ENCODE measurements at regions of chr15 and their contacts with region 1.

Region 1: GRCh38 chr15:80776420-80777045 is 2.6 kb upstream of the CEMIP start:
- DNase-seq: peak; percentile 87
- ATAC-seq: peak; percentile 4; the same call in 1 of the 2 replicates
- H3K4me3 ChIP-seq: no peak overlapping the region
- H3K27ac ChIP-seq: peak overlapping the region; percentile 19; the same call in 1 of the 2 replicates
- H3K4me1 ChIP-seq: peaks cover 20% of the 10 kb centered on the region
- H3K27me3 ChIP-seq: no peaks in the 10 kb centered on the region
- CTCF ChIP-seq: peak; percentile 94
- POLR2A ChIP-seq: no peak
- RAD21 ChIP-seq: peak; percentile 91

Region 2: DNA sequence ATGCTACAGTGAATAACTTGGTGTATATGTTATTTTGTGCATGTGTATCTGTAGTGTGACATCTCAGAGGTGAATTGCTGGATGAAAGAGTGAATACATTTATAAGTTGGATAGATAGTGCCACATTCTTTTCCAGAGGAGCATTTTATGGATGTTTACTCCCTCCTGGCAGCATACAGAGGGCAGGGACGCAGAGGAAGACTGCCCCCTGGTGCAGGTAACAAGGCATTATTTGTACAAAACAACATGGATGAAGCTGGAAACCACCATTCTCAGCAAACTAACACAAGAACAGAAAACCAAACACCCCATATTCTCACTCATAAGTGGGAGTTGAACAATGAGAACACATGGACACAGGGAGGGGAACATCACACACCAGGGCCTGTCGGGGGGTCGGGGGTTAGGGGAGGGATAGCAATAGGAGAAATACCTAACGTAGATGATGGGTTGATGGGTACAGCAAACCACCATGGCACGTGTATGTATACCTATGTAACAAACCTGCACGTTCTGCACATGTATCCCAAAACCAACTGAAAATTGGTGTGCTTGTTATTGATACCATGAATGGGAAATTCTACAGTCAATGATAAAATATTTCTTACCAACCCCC is 466.7 kb before region 1 on chr15:
- CTCF ChIA-PET with region 1: no interaction called
- POLR2A ChIA-PET with region 1: no interaction called
- dilution Hi-C with region 1: no loop called
- in situ Hi-C with region 1: no loop called
- intact Hi-C with region 1: loop called (anchors 10 kb)
- DNase-seq: peak; percentile 34
- ATAC-seq: peak; percentile 77
- H3K4me3 ChIP-seq: no peak overlapping the region
- H3K27ac ChIP-seq: no peak overlapping the region
- H3K4me1 ChIP-seq: no peaks in the 10 kb centered on the region
- H3K27me3 ChIP-seq: peaks cover 2% of the 10 kb centered on the region; the same call in 1 of the 2 replicates
- CTCF ChIP-seq: peak; percentile 57
- POLR2A ChIP-seq: no peak
- RAD21 ChIP-seq: peak; percentile 68

Region 3: GRCh38 chr15:80480909-80481308 is 295.6 kb before region 1 on chr15:
- CTCF ChIA-PET with region 1: no interaction called
- POLR2A ChIA-PET with region 1: interaction called, 4 read pairs
- dilution Hi-C with region 1: no loop called
- in situ Hi-C with region 1: no loop called
- intact Hi-C with region 1: loop called (anchors 10 kb)
- DNase-seq: peak; percentile 97
- ATAC-seq: peak; percentile 69
- H3K4me3 ChIP-seq: peak overlapping the region; percentile 8; the same call in 1 of the 2 replicates
- H3K27ac ChIP-seq: peak overlapping the region; percentile 95
- H3K4me1 ChIP-seq: peaks cover 58% of the 10 kb centered on the region
- H3K27me3 ChIP-seq: no peaks in the 10 kb centered on the region
- CTCF ChIP-seq: no peak
- POLR2A ChIP-seq: no peak
- RAD21 ChIP-seq: peak; percentile 12; the same call in 1 of the 2 replicates

Region 4: GRCh38 chr15:80588801-80589200 is 187.7 kb before region 1 on chr15:
- CTCF ChIA-PET with region 1: interaction called, 12 read pairs
- POLR2A ChIA-PET with region 1: no interaction called
- dilution Hi-C with region 1: no loop called
- in situ Hi-C with region 1: no loop called
- intact Hi-C with region 1: no loop called
- DNase-seq: peak; percentile 100
- ATAC-seq: peak; percentile 92
- H3K4me3 ChIP-seq: no peak overlapping the region
- H3K27ac ChIP-seq: peak overlapping the region; percentile 90
- H3K4me1 ChIP-seq: peaks cover 17% of the 10 kb centered on the region
- H3K27me3 ChIP-seq: no peaks in the 10 kb centered on the region
- CTCF ChIP-seq: no peak
- POLR2A ChIP-seq: peak; percentile 74
- RAD21 ChIP-seq: no peak

Region 5: DNA sequence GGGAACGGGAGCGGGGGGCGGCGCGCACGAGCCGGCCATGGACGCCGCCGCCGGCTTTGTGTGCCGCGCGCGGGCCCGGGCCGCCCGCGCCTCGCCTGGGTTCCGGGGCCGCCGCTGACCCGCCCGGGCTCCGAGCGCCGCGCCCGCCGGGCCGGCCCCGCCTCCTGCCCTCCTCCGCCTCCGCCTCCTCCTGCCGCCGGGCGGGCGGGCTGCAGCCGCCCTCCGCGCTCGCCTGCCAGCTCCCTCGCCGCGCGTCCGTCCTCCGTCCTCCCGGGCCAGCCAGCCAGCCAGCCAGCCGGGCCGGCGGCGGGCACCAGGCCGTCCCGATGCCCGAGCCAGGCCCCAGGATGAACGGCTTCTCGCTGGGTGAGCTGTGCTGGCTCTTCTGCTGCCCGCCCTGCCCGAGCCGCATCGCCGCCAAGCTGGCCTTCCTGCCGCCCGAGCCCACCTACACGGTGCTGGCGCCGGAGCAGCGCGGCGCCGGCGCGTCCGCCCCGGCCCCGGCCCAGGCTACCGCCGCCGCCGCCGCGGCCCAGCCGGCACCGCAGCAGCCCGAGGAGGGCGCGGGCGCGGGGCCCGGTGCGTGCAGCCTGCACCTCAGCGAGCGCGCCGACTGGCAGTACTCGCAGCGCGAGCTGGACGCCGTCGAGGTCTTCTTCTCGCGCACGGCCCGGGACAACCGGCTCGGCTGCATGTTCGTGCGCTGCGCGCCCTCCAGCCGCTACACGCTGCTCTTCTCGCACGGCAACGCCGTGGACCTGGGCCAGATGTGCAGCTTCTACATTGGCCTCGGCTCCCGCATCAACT is 81.2 kb before region 1 on chr15 and contains the start of gene ABHD17C:
- CTCF ChIA-PET with region 1: interaction called, 8 read pairs
- POLR2A ChIA-PET with region 1: no interaction called
- dilution Hi-C with region 1: no loop called
- in situ Hi-C with region 1: no loop called
- intact Hi-C with region 1: loop called (anchors 1 kb)
- DNase-seq: peak; percentile 53
- ATAC-seq: peak; percentile 84
- H3K4me3 ChIP-seq: peak within 1 kb of the TSS; percentile 100
- H3K27ac ChIP-seq: peak within 1 kb of the TSS; percentile 92
- H3K4me1 ChIP-seq: peaks cover 14% of the 10 kb centered on the region
- H3K27me3 ChIP-seq: no peaks in the 10 kb centered on the region
- CTCF ChIP-seq: no peak
- POLR2A ChIP-seq: no peak
- RAD21 ChIP-seq: no peak; the same call in 1 of the 2 replicates
- total RNA-seq, gene ABHD17C: 5.3 and 5.4 TPM in 2 replicates

Measured in IMR-90 (cell line).